ENCODE measurements at regions of chr9 and their contacts with region 1.

Region 1: DNA sequence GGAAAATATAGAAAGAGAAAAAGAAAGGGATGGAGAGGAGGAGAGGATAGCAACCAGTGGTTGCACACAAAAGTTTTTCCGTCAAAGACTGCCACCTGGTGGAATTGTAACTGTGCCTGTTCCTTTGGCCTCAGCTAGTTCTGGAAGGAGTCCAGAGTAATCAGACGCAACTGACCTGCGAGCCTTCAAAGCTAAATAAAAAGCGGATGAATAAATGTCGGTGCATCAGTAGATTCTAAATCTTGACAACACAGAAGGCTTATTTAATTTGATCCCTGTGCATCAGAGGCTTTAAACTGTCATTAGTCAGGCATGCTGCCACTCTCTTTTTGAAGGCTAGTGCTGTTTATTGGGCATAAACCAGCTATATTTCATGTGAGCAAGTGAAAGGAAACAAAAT is 132.9 kb upstream of the ACO1 start:
- DNase-seq: peak; percentile 52
- CTCF ChIP-seq: peak; percentile 82

Region 2: GRCh38 chr9:31820426-31820825 is 431.1 kb before region 1 on chr9:
- CTCF ChIA-PET with region 1: no interaction called
- POLR2A ChIA-PET with region 1: no interaction called
- DNase-seq: no peak
- CTCF ChIP-seq: no peak

Region 3: DNA sequence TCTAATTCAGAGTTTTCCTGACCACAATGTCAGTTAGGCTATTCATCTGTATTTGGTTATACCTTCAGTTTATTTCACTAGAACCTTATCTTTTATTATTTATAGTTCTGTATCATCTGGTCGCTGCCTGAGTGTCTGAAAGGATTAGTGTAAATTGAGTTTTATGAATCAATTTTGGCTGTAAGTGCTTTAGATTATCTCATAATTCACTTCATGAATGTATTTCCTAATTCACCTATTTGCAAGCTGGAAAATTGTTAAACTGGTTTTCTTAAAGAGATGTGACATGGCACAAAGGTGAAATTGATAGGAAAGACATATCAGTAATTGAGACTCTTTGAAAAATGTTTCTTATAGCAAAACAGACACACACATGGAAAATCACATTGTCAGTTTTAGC is 109.5 kb before region 1 on chr9:
- CTCF ChIA-PET with region 1: interaction called, 53 read pairs
- POLR2A ChIA-PET with region 1: no interaction called
- DNase-seq: no peak
- CTCF ChIP-seq: no peak

Region 4: GRCh38 chr9:32264170-32264862 is 12.8 kb after region 1 on chr9:
- CTCF ChIA-PET with region 1: interaction called, 20 read pairs
- POLR2A ChIA-PET with region 1: no interaction called
- DNase-seq: no peak
- CTCF ChIP-seq: no peak

Region 5: GRCh38 chr9:32350682-32351081 is 99.1 kb after region 1 on chr9:
- CTCF ChIA-PET with region 1: no interaction called
- POLR2A ChIA-PET with region 1: no interaction called
- DNase-seq: no peak
- CTCF ChIP-seq: peak; percentile 26

Region 6: GRCh38 chr9:32558408-32558934 is 306.9 kb after region 1 on chr9:
- CTCF ChIA-PET with region 1: no interaction called
- POLR2A ChIA-PET with region 1: no interaction called
- DNase-seq: no peak
- CTCF ChIP-seq: no peak